ENCODE measurements at regions of chr1 and their contacts with region 1.

Region 1: GRCh38 chr1:53945433-53946251 is at the start of gene IFT25:
- DNase-seq: peak; percentile 85
- ATAC-seq: peak; percentile 85
- H3K4me3 ChIP-seq: peak within 1 kb of the TSS; percentile 84 to 99 (median 98)
- H3K27ac ChIP-seq: peak within 1 kb of the TSS; percentile 82
- H3K4me1 ChIP-seq: peaks cover 69% of the 10 kb centered on the region
- H3K27me3 ChIP-seq: no peaks in the 10 kb centered on the region; a peak in 1 of 5 replicates
- CTCF ChIP-seq: no peak
- EP300 ChIP-seq: no peak
- POLR2A ChIP-seq: peak; percentile 24 to 86; a peak in 3 of 4 replicates
- RAD21 ChIP-seq: peak; percentile 42; the same call in 1 of the 2 replicates
- total RNA-seq, gene IFT25: 48.0 and 52.8 TPM in 2 replicates

Region 2: DNA sequence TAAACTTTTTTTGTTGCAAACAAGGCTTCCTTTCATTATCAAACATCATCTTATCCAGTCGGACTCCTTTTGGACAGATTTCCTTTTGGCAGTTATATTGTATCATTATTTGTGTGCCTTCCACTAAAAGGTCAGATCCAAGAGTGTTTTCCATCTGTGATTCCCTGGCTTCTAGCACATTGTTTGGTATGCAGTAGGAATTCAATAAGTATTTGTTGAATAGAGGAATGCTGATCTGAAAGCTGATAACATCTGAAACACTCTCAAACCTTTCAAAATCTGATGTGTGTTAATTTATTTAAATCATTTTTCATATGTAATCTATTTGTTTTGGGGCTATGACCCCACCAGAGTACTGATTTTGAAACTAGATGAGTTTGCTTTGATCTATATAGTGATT is 146.5 kb before region 1 on chr1:
- CTCF ChIA-PET with region 1: no interaction called
- POLR2A ChIA-PET with region 1: no interaction called
- in situ Hi-C with region 1: no loop called
- intact Hi-C with region 1: no loop called
- DNase-seq: peak; percentile 4
- ATAC-seq: no peak
- H3K4me3 ChIP-seq: no peak overlapping the region
- H3K27ac ChIP-seq: no peak overlapping the region
- H3K4me1 ChIP-seq: 0 out of 2 replicates have a peak, but pooled peaks cover 6% of the 10 kb centered on the region
- H3K27me3 ChIP-seq: no peaks in the 10 kb centered on the region; a peak in 1 of 5 replicates
- CTCF ChIP-seq: no peak
- EP300 ChIP-seq: no peak
- POLR2A ChIP-seq: no peak
- RAD21 ChIP-seq: no peak

Region 3: DNA sequence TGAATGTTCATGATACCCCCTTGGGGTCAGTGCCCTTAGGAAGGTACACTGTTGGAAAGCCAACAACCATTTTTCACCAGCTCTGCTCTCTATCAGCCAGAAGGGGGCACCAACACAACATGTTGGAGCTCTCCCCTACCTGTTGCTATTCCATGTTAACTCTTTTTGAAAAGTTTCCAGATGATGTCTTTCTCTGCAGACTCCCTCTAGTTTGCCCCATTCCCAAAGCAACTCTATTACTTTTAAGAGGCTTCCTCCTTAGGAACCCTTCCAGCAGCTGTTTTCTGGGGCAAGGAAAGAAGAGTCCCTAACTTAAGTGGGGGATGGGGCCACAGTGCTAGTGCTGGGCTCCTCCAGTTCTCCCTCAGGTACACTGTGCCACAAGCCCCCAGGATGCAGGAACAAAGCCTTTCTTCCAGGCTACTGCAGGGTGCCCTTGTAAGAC is 84.7 kb before region 1 on chr1:
- CTCF ChIA-PET with region 1: interaction called, 19 read pairs
- POLR2A ChIA-PET with region 1: interaction called, 5 read pairs
- in situ Hi-C with region 1: no loop called
- intact Hi-C with region 1: loop called (anchors 1 kb)
- DNase-seq: peak; percentile 69
- ATAC-seq: peak; percentile 97
- H3K4me3 ChIP-seq: no peak overlapping the region
- H3K27ac ChIP-seq: no peak overlapping the region
- H3K4me1 ChIP-seq: no peaks in the 10 kb centered on the region
- H3K27me3 ChIP-seq: no peaks in the 10 kb centered on the region
- CTCF ChIP-seq: peak; percentile 90
- EP300 ChIP-seq: no peak
- POLR2A ChIP-seq: no peak
- RAD21 ChIP-seq: peak; percentile 76; the same call in 1 of the 2 replicates

Region 4: DNA sequence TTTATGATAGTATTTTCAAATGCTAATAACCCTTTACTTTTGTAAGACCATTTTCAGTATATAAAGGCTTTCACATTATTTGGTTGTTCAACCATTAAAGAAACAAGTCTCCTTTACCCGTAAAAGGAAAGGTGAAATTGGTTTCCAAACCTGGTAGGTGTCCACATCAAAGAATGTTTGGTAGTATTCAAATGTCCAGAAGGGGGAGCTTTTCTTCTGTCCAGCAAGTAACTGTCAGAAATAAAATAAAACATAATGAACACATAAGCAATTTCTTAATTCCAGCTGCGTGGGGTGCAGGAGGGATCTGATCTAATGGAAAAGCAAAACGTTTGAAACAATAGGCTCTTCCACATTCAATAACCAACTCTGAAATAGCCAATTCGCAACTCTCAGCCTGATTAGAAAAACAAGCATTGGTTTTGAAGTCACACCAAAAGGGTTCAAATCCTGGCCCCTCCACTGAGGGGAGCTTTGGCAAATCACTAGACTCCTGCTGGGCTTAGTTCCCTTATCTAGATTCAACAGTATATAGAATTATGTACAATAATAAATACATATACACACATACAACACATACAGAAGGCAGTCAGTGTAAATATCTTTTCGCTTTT is 67.0 kb before region 1 on chr1:
- CTCF ChIA-PET with region 1: interaction called, 53 read pairs
- POLR2A ChIA-PET with region 1: interaction called, 6 read pairs
- in situ Hi-C with region 1: no loop called
- intact Hi-C with region 1: loop called (anchors 1 kb)
- DNase-seq: peak; percentile 57
- ATAC-seq: no peak
- H3K4me3 ChIP-seq: no peak overlapping the region
- H3K27ac ChIP-seq: no peak overlapping the region
- H3K4me1 ChIP-seq: no peaks in the 10 kb centered on the region
- H3K27me3 ChIP-seq: no peaks in the 10 kb centered on the region
- CTCF ChIP-seq: peak; percentile 67
- EP300 ChIP-seq: no peak
- POLR2A ChIP-seq: no peak
- RAD21 ChIP-seq: peak; percentile 49; the same call in 1 of the 2 replicates

Region 5: GRCh38 chr1:53889304-53890298 is 56.0 kb before region 1 on chr1 and contains the start of gene YIPF1:
- CTCF ChIA-PET with region 1: no interaction called
- POLR2A ChIA-PET with region 1: interaction called, 19 read pairs
- in situ Hi-C with region 1: loop called (anchors 5 kb)
- intact Hi-C with region 1: loop called (anchors 5 kb)
- DNase-seq: peak; percentile 75
- ATAC-seq: peak; percentile 94
- H3K4me3 ChIP-seq: peak within 1 kb of the TSS; percentile 87 to 100 (median 97)
- H3K27ac ChIP-seq: peak within 1 kb of the TSS; percentile 56
- H3K4me1 ChIP-seq: peaks cover 40% of the 10 kb centered on the region
- H3K27me3 ChIP-seq: no peaks in the 10 kb centered on the region; a peak in 1 of 5 replicates
- CTCF ChIP-seq: no peak
- EP300 ChIP-seq: no peak
- POLR2A ChIP-seq: peak; percentile 26 to 60; a peak in 2 of 4 replicates
- RAD21 ChIP-seq: peak; percentile 10; the same call in 1 of the 2 replicates
- total RNA-seq, gene YIPF1: 19.0 and 21.1 TPM in 2 replicates

Region 6: GRCh38 chr1:53896635-53897229 is 48.9 kb before region 1 on chr1:
- CTCF ChIA-PET with region 1: no interaction called
- POLR2A ChIA-PET with region 1: interaction called, 46 read pairs
- in situ Hi-C with region 1: loop called (anchors 5 kb)
- intact Hi-C with region 1: loop called (anchors 5 kb)
- DNase-seq: peak; percentile 20
- ATAC-seq: no peak
- H3K4me3 ChIP-seq: no peak overlapping the region
- H3K27ac ChIP-seq: peak overlapping the region; percentile 33
- H3K4me1 ChIP-seq: peaks cover 90% of the 10 kb centered on the region
- H3K27me3 ChIP-seq: no peaks in the 10 kb centered on the region
- CTCF ChIP-seq: no peak
- EP300 ChIP-seq: no peak
- POLR2A ChIP-seq: no peak
- RAD21 ChIP-seq: no peak

Region 7: GRCh38 chr1:53909946-53910345 is 35.7 kb before region 1 on chr1:
- CTCF ChIA-PET with region 1: no interaction called
- POLR2A ChIA-PET with region 1: interaction called, 14 read pairs
- in situ Hi-C with region 1: no loop called
- intact Hi-C with region 1: no loop called
- DNase-seq: peak; percentile 64
- ATAC-seq: peak; percentile 69
- H3K4me3 ChIP-seq: no peak overlapping the region
- H3K27ac ChIP-seq: no peak overlapping the region
- H3K4me1 ChIP-seq: peaks cover 58% of the 10 kb centered on the region
- H3K27me3 ChIP-seq: no peaks in the 10 kb centered on the region
- CTCF ChIP-seq: no peak
- EP300 ChIP-seq: no peak
- POLR2A ChIP-seq: no peak
- RAD21 ChIP-seq: no peak

Region 8: DNA sequence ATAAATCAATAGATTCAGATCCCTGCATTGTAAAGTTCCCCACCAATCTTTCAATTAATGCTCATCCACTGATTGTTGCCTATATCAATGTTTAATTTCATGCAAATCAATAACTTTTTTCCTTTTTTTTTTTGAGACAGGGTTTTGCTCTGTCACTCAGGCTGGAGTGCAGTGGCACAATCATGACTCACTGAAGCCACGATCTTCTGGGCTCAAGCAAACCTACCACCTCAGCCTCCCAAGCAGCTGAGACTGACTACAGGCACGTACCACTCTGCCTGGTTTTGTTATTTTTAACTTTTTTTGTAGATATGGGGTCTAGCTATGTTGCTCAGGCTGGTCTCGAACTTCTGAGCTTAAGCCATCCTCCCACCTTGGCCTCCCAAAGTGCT is 26.0 kb before region 1 on chr1:
- CTCF ChIA-PET with region 1: no interaction called
- POLR2A ChIA-PET with region 1: interaction called, 10 read pairs
- in situ Hi-C with region 1: no loop called
- intact Hi-C with region 1: no loop called
- DNase-seq: no peak
- ATAC-seq: peak; percentile 57
- H3K4me3 ChIP-seq: no peak overlapping the region
- H3K27ac ChIP-seq: peak overlapping the region; percentile 51
- H3K4me1 ChIP-seq: peaks cover 32% of the 10 kb centered on the region
- H3K27me3 ChIP-seq: no peaks in the 10 kb centered on the region
- CTCF ChIP-seq: no peak
- EP300 ChIP-seq: no peak
- POLR2A ChIP-seq: no peak
- RAD21 ChIP-seq: no peak

Region 9: GRCh38 chr1:54167422-54168139 is 221.9 kb after region 1 on chr1:
- CTCF ChIA-PET with region 1: no interaction called
- POLR2A ChIA-PET with region 1: no interaction called
- in situ Hi-C with region 1: no loop called
- intact Hi-C with region 1: no loop called
- DNase-seq: no peak
- ATAC-seq: no peak
- H3K4me3 ChIP-seq: no peak overlapping the region
- H3K27ac ChIP-seq: no peak overlapping the region
- H3K4me1 ChIP-seq: peaks cover 16% of the 10 kb centered on the region
- H3K27me3 ChIP-seq: no peaks in the 10 kb centered on the region
- CTCF ChIP-seq: no peak
- EP300 ChIP-seq: no peak
- POLR2A ChIP-seq: no peak
- RAD21 ChIP-seq: no peak

Region 10: GRCh38 chr1:54323324-54323739 is 377.7 kb after region 1 on chr1:
- CTCF ChIA-PET with region 1: no interaction called
- POLR2A ChIA-PET with region 1: no interaction called
- in situ Hi-C with region 1: no loop called
- intact Hi-C with region 1: no loop called
- DNase-seq: peak; percentile 64
- ATAC-seq: peak; percentile 94
- H3K4me3 ChIP-seq: peak overlapping the region in 1 of 3 experiments; percentile 54; a peak in 1 of 6 replicates
- H3K27ac ChIP-seq: no peak overlapping the region
- H3K4me1 ChIP-seq: peaks cover 33% of the 10 kb centered on the region
- H3K27me3 ChIP-seq: no peaks in the 10 kb centered on the region
- CTCF ChIP-seq: peak; percentile 61
- EP300 ChIP-seq: peak in 1 of 2 experiments; percentile 48; a peak in 1 of 4 replicates
- POLR2A ChIP-seq: no peak
- RAD21 ChIP-seq: peak; percentile 53

Region 11: DNA sequence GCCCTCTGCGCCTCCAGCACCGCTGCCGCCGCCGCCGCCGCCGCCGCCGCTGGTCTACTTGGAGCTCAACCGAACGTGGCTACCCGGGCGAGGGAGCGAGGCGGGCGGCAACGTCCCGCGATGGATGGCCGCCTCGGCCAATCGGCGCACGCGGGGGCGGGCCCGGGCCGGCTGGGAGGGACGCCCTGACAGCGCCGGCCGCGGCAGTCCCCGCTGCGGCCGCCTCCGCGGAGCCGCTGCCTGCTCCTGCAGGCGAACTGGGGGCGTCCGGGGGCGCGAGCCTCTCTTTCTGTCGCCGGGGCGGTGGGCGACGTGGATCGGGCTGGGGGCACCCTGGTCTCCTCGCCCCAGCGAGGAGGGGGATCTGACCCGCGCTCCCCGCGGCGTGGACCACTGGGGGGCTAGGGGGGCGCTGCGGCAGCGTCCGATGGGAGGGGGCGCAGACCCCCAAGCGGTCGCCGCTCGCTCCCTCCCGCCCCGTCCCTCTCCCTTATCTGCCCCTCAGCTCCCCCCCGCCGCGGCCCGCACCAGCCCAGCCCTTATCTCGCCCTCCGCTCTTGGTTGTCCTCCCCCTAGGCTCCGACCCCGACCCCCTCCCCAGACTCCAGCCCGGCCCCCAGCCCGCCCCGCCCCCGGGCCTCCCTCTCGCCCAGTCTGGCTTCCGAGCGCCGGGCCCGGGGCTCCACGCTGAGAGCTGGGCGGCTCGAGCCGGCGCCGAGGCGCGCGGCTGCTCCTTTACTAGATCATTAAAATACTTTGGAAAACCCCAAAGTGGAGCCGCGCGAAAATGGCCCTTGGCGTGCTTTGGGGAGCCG is 460.9 kb after region 1 on chr1 and contains the start of gene SSBP3:
- CTCF ChIA-PET with region 1: no interaction called
- POLR2A ChIA-PET with region 1: no interaction called
- in situ Hi-C with region 1: no loop called
- intact Hi-C with region 1: no loop called
- DNase-seq: peak; percentile 79
- ATAC-seq: peak; percentile 93
- H3K4me3 ChIP-seq: peak within 1 kb of the TSS; percentile 73 to 97 (median 84)
- H3K27ac ChIP-seq: peak within 1 kb of the TSS; percentile 61
- H3K4me1 ChIP-seq: peaks cover 59% of the 10 kb centered on the region
- H3K27me3 ChIP-seq: no peaks in the 10 kb centered on the region; a peak in 1 of 5 replicates
- CTCF ChIP-seq: peak; percentile 26; the same call in 1 of the 2 replicates
- EP300 ChIP-seq: no peak
- POLR2A ChIP-seq: peak in 1 of 2 experiments; percentile 38; a peak in 1 of 4 replicates
- RAD21 ChIP-seq: peak; percentile 43; the same call in 1 of the 2 replicates
- total RNA-seq, gene SSBP3: 7.5 and 8.5 TPM in 2 replicates